Panc1 (cell line): ENCODE measurements at regions of chr15 and their contacts with region 1.

Region 1: DNA sequence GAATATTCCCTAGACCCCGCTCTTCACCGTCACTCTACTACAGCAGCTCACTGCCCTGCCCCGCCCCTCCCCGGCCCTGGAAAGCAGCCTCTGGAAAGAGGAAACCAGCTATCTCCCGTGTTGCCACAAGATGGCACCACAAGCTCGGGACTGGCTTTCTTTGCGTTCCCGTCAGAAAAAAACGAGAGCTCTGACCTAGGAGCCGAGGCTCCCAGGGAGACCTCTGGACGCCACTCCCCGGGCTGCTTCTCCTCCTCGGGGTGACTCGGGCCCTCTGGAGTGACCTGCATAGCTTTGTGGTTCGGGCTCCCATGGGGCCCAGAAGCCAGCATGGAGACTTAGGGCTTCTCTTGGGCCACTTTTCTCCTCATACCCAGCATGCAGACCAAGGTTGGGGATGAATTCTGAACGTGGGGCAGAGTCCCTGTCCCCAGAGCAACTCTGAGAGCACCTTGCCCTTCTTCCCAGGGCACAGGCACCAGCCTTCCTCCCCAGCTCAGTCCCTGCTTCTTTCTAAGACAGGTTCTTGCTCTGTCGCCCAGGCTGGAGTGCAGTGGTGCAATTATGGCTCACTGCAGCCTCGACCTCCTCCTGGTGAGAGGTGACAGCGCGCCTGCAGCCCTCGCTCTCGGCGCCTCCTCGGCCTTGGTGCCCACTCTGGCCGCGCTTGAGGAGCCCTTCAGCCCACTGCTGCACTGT is 19.0 kb downstream of the STOML1 start:
- DNase-seq: peak; percentile 72
- ATAC-seq: peak; percentile 98
- H3K4me3 ChIP-seq: peak overlapping the region; percentile 25 to 45
- H3K27ac ChIP-seq: no peak overlapping the region
- H3K4me1 ChIP-seq: 0 out of 2 replicates have a peak, but pooled peaks cover 5% of the 10 kb centered on the region
- H3K27me3 ChIP-seq: no peaks in the 10 kb centered on the region
- CTCF ChIP-seq: peak; percentile 93

Region 2: DNA sequence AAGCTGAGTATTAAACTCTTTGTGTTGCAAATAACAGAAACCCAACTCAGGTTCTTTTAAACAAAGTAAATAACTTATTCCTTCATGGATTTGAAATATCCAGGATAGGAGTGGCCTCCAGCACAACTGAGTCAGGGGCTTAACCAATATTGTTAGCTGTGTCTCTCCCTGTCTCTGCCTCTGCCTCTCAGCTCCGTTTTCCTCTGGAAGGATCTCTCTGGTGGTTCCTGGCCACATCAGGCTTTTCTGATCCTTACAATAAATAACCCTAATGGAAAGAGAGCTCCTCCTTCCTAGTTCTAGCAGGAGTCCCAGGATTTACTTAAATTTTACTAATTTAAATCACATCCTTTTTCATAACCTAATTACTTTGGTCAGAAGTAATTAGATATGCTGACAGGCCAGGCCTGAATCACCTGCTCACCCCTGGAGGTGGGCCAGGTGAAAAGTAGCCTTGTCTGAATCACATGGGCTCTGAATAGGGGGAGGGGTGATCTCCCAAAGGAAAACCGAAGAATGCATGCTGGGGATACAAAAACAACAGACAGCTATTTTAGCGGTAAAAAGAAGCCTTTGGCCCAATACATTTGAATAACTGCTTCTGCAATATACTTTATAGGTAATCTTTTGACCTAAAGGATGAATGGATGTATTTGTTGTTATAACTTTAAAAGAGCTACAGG is 454.8 kb before region 1 on chr15:
- CTCF ChIA-PET with region 1: no interaction called
- POLR2A ChIA-PET with region 1: no interaction called
- in situ Hi-C with region 1: no loop called
- intact Hi-C with region 1: no loop called
- DNase-seq: no peak
- ATAC-seq: no peak
- H3K4me3 ChIP-seq: no peak overlapping the region
- H3K27ac ChIP-seq: no peak overlapping the region
- H3K4me1 ChIP-seq: no peaks in the 10 kb centered on the region
- H3K27me3 ChIP-seq: peaks cover 6% of the 10 kb centered on the region; the same call in 1 of the 2 replicates
- CTCF ChIP-seq: no peak

Region 3: DNA sequence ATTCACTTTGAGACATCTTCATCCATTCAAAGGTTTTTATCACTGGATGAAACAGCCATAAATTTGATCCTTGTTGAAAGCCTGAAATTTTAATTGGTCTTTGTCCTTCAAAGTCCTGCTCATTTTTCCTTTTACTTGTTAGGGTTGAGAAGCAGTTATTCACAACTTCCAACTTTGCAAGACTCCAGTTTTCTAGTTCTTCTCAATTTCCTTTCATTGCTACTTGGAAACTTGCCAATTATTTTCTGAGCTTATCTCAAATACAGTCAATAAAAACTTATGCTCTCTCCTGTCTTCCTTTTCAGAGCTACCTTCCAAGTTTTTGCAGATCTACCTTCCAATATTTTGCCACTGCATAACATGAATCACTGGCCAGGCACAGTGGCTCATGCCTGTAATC is 312.7 kb before region 1 on chr15:
- CTCF ChIA-PET with region 1: no interaction called
- POLR2A ChIA-PET with region 1: no interaction called
- in situ Hi-C with region 1: no loop called
- intact Hi-C with region 1: no loop called
- DNase-seq: no peak
- ATAC-seq: no peak
- H3K4me3 ChIP-seq: no peak overlapping the region
- H3K27ac ChIP-seq: no peak overlapping the region
- H3K4me1 ChIP-seq: no peaks in the 10 kb centered on the region
- H3K27me3 ChIP-seq: peaks cover 6% of the 10 kb centered on the region
- CTCF ChIP-seq: no peak

Region 4: DNA sequence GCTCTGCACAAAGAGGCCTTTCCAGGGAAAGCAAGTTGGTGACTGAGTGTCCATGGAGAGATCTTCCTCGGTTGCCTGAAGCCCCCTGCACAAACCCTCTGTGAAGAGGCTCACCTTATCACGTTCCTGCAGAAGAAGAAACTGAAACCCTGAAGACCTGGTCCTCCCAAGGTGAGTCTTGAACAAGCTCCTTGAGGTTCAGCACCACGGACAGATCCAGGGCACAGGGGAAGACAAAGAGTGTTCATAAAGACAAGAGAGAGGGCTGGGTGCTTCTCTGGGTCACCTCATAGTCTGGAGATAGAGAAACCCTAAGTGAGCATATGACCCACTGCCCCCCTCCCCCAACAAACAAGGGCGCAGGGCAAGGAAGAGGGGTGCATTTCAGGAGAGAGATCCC is 121.4 kb before region 1 on chr15:
- CTCF ChIA-PET with region 1: no interaction called
- POLR2A ChIA-PET with region 1: no interaction called
- in situ Hi-C with region 1: no loop called
- intact Hi-C with region 1: no loop called
- DNase-seq: no peak
- ATAC-seq: no peak
- H3K4me3 ChIP-seq: no peak overlapping the region
- H3K27ac ChIP-seq: no peak overlapping the region
- H3K4me1 ChIP-seq: no peaks in the 10 kb centered on the region
- H3K27me3 ChIP-seq: peaks cover 2% of the 10 kb centered on the region; the same call in 1 of the 2 replicates
- CTCF ChIP-seq: no peak

Region 5: GRCh38 chr15:73936181-73936580 is 37.0 kb before region 1 on chr15:
- CTCF ChIA-PET with region 1: no interaction called
- POLR2A ChIA-PET with region 1: no interaction called
- in situ Hi-C with region 1: no loop called
- intact Hi-C with region 1: no loop called
- DNase-seq: no peak
- ATAC-seq: no peak
- H3K4me3 ChIP-seq: no peak overlapping the region
- H3K27ac ChIP-seq: no peak overlapping the region
- H3K4me1 ChIP-seq: no peaks in the 10 kb centered on the region
- H3K27me3 ChIP-seq: no peaks in the 10 kb centered on the region
- CTCF ChIP-seq: no peak

Region 6: GRCh38 chr15:73950831-73951561 is 22.1 kb before region 1 on chr15:
- CTCF ChIA-PET with region 1: interaction called, 15 read pairs
- POLR2A ChIA-PET with region 1: no interaction called
- in situ Hi-C with region 1: no loop called
- intact Hi-C with region 1: no loop called
- DNase-seq: no peak
- ATAC-seq: peak; percentile 96
- H3K4me3 ChIP-seq: no peak overlapping the region
- H3K27ac ChIP-seq: no peak overlapping the region
- H3K4me1 ChIP-seq: peaks cover 6% of the 10 kb centered on the region; the same call in 1 of the 2 replicates
- H3K27me3 ChIP-seq: no peaks in the 10 kb centered on the region
- CTCF ChIP-seq: peak; percentile 93

Region 7: DNA sequence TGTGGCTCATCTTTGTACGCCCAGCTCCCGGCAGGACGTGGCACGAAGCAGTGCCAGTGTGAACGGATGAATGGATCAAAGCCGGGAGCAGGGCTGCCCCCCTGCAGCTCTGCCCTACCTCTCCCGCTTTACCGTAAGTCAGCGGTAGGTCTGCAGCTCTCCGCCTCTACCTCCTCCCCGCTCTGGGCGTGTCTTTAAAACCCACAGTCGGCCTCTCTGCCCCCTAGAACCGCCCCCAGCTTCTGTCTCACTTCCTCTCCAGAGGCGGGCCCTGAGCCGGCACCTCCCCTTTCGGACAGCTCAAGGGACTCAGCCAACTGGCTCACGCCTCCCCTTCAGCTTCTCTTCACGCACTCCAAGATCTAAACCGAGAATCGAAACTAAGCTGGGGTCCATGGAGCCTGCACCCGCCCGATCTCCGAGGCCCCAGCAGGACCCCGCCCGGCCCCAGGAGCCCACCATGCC is 21.3 kb after region 1 on chr15 and contains the start of gene PML:
- CTCF ChIA-PET with region 1: interaction called, 16 read pairs
- POLR2A ChIA-PET with region 1: interaction called, 9 read pairs
- in situ Hi-C with region 1: no loop called
- intact Hi-C with region 1: no loop called
- DNase-seq: peak; percentile 72
- ATAC-seq: peak; percentile 92
- H3K4me3 ChIP-seq: peak within 1 kb of the TSS; percentile 82 to 89
- H3K27ac ChIP-seq: peak within 1 kb of the TSS; percentile 87
- H3K4me1 ChIP-seq: peaks cover 38% of the 10 kb centered on the region
- H3K27me3 ChIP-seq: no peaks in the 10 kb centered on the region
- CTCF ChIP-seq: no peak
- total RNA-seq, gene PML: 52.2 TPM

Region 8: GRCh38 chr15:74036271-74037170 is 63.4 kb after region 1 on chr15:
- CTCF ChIA-PET with region 1: interaction called, 51 read pairs
- POLR2A ChIA-PET with region 1: no interaction called
- in situ Hi-C with region 1: no loop called
- intact Hi-C with region 1: loop called (anchors 1 kb)
- DNase-seq: no peak
- ATAC-seq: peak; percentile 79
- H3K4me3 ChIP-seq: no peak overlapping the region
- H3K27ac ChIP-seq: no peak overlapping the region
- H3K4me1 ChIP-seq: no peaks in the 10 kb centered on the region
- H3K27me3 ChIP-seq: no peaks in the 10 kb centered on the region
- CTCF ChIP-seq: peak; percentile 81; the same call in 1 of the 2 replicates

Region 9: DNA sequence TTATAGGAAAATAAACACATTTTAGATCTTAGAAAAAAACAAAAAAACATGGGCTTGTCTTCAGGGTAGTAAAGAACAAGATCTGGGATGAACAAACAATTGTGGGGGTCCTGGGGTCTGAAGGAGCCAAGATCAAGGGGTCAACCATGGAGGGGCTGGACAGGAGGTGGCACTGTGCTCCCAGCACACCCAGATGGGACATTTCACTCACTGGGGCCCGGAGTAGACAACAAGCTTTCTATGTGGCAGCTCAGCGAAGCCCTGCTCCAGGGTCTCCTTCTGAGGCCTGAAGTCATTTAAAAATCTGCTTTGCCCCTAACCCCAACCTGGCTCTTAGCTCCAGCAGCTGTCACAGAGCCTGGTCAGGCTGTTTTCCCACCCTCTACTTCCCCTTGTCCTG is 74.6 kb after region 1 on chr15:
- CTCF ChIA-PET with region 1: interaction called, 11 read pairs
- POLR2A ChIA-PET with region 1: interaction called, 4 read pairs
- in situ Hi-C with region 1: no loop called
- intact Hi-C with region 1: no loop called
- DNase-seq: no peak
- ATAC-seq: no peak
- H3K4me3 ChIP-seq: no peak overlapping the region
- H3K27ac ChIP-seq: no peak overlapping the region
- H3K4me1 ChIP-seq: no peaks in the 10 kb centered on the region
- H3K27me3 ChIP-seq: no peaks in the 10 kb centered on the region
- CTCF ChIP-seq: no peak

Region 10: DNA sequence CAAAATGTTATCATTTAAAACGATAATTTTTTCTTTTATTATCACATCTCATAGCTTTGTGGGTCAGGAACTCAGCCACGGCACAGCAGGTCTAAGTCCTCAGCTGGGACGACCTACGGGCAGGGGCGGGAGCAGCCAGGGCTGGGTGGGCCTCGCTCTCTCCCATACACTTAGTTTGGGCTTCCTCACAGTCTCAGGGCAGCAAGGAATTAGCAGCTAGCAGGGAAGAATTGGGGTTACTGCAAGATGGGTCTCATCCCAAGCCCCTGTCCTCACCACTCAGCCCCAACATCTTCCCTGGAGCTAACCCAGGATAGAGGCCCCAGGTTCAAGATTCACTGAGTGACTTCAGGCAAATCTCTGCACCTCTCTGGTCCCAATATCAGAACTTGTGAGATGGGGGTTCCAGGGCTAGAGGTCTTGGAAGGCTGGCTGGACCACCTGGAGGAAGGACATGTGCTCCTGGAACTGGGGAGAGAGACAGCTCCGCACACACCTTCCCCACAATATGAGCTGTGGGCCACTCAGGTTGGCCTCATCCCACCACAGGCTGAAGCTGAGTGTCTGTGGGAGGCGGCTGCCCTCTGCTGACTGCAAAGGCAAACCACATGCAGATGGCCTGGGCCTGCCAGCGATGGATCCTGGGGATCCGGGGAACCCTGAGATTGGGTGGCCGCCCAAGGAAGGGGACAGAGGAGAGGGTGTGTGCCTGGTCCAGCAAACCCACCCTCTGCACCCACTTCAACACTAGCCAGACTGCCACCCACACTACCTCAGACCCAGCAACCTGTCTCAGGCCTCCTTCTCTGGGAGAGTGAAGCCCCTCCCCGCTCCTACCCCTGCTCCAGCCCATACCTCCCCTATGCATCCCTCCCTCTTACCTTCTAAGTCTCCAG is 349.3 kb after region 1 on chr15:
- CTCF ChIA-PET with region 1: interaction called, 10 read pairs
- POLR2A ChIA-PET with region 1: no interaction called
- in situ Hi-C with region 1: no loop called
- intact Hi-C with region 1: loop called (anchors 10 kb)
- DNase-seq: peak; percentile 50
- ATAC-seq: peak; percentile 92
- H3K4me3 ChIP-seq: no peak overlapping the region
- H3K27ac ChIP-seq: no peak overlapping the region
- H3K4me1 ChIP-seq: no peaks in the 10 kb centered on the region; the same call in 1 of the 2 replicates
- H3K27me3 ChIP-seq: no peaks in the 10 kb centered on the region
- CTCF ChIP-seq: peak; percentile 95